WTC11 (cell line): ENCODE measurements at regions of chr2 and their contacts with region 1.

Region 1: DNA sequence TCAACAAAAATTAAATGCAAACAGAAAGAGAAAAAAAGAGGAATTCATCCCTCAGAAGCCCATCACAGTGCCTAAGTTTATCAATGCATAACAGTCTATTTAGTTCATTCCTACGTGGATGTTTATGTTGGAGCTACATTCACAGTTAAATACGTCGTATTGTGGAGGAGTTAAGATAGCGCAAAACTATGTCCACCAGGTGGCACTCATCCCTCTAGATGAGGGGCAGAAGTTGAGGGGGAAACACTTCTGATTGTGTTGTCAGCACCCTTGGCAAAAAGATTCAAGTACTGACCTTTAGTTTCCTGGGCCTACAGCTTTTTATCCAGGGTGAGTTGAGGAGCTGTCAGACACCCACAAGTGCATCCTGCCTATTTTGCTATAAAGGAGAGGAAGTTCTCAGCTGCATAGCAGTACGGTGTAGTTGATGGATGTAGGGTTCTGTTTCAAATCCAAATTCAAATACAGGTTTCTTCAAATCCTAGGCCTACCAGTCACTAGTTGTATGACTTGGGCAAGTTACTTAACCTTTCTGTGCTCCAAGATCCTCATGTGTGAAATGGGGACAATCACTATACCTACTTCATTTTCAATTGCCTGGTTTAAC is 26.8 kb upstream of the MYO1B start:
- DNase-seq: peak; percentile 73
- ATAC-seq: peak; percentile 94
- H3K4me3 Mint-ChIP-seq: no peak overlapping the region
- H3K27ac Mint-ChIP-seq: no peak overlapping the region
- H3K4me1 Mint-ChIP-seq: peaks cover 9% of the 10 kb centered on the region
- H3K27me3 Mint-ChIP-seq: no peaks in the 10 kb centered on the region
- CTCF ChIP-seq: no peak; the same call in 1 of the 2 replicates

Region 2: DNA sequence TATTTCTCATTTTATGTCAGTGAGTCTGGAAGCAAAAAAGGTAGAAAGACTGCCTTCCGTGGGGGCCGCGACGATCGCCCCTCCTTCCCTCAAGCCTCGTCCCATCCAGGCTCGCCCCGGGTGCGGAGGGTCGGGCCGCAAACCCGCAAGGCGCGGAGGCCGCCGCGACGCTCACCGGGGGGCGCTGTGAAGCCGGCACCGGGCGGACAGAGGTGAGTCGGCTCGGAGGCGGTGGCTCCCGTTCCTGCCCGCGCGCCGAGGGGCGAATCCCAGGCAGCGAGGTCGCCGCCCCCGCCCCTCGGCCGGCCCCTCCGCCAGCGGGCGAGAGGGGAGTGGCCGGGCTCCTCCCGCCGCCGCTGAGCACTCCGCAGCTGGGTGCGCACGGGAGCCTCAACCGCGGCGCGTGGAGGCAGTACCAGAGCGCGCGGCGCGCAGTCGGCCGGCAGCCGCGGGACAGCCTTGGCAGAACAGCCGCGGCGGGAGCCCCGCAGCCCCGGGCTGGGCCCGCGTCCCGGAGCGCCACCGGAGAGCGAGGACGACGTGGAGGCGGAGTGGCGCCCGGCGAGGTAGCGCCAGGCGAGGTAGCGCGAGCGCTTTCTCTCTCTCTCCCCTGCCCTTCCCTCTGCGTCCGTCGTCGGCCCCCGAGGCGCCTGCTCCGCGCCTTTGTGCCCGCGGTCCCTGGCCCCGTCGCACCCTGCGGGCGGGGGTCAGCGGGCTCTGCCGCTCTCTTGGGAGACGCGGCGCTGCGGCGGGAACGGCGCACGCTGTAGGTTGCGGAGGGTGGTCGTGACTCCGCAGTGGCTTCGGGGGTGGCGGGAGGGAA is 26.9 kb after region 1 on chr2 and contains the start of gene MYO1B:
- CTCF ChIA-PET with region 1: interaction called, 10 read pairs
- POLR2A ChIA-PET with region 1: no interaction called
- DNase-seq: peak; percentile 86
- ATAC-seq: peak; percentile 85
- H3K4me3 Mint-ChIP-seq: peak within 1 kb of the TSS; percentile 83
- H3K27ac Mint-ChIP-seq: peak within 1 kb of the TSS; percentile 91
- H3K4me1 Mint-ChIP-seq: peaks cover 41% of the 10 kb centered on the region
- H3K27me3 Mint-ChIP-seq: no peaks in the 10 kb centered on the region; the same call in 1 of the 2 replicates
- CTCF ChIP-seq: no peak
- total RNA-seq, gene MYO1B: 39.0 to 43.6 TPM (median 43.5 TPM) in 3 replicates

Region 3: DNA sequence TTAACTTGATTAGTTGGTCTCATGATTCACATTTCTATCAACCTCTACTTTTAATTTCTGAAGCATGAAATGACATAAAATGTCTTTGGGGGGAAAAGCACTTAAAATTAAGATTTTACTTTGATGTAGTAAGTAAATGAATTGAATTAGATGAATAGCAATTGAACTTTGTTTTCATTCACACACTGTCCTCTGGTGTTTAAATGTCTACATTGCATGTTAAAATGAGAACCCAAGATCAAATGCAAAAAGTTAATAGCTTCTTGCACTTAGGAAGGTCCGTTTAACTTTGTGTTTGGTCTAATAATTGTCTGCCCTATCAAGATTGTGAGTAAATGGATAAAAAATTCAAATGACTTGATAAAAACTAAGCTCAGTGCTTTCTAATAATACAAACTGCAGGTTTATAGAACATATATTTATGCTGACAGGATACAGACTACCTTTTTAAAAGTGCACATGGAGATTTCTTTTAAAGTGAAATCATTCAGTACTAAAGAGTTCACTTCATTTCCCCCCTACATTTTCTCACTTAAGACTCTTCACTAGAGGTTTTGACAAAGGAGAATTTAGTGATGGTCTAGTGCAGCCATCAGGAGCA is 303.3 kb after region 1 on chr2:
- CTCF ChIA-PET with region 1: interaction called, 15 read pairs
- POLR2A ChIA-PET with region 1: no interaction called
- DNase-seq: no peak
- ATAC-seq: no peak
- H3K4me3 Mint-ChIP-seq: no peak overlapping the region
- H3K27ac Mint-ChIP-seq: no peak overlapping the region
- H3K4me1 Mint-ChIP-seq: no peaks in the 10 kb centered on the region
- H3K27me3 Mint-ChIP-seq: no peaks in the 10 kb centered on the region
- CTCF ChIP-seq: peak; percentile 50; the same call in 1 of the 2 replicates

Region 4: GRCh38 chr2:191539068-191539467 is 320.7 kb after region 1 on chr2:
- CTCF ChIA-PET with region 1: interaction called, 14 read pairs
- POLR2A ChIA-PET with region 1: no interaction called
- DNase-seq: peak; percentile 41
- ATAC-seq: no peak
- H3K4me3 Mint-ChIP-seq: no peak overlapping the region
- H3K27ac Mint-ChIP-seq: no peak overlapping the region
- H3K4me1 Mint-ChIP-seq: peaks cover 25% of the 10 kb centered on the region
- H3K27me3 Mint-ChIP-seq: no peaks in the 10 kb centered on the region; the same call in 1 of the 2 replicates
- CTCF ChIP-seq: 0 out of 2 replicates have a peak, but pooled peaks have one; percentile 13